Posterior vena cava (tissue), 2 donors: ENCODE measurements at regions of chr18 and their contacts with region 1.

Region 1: DNA sequence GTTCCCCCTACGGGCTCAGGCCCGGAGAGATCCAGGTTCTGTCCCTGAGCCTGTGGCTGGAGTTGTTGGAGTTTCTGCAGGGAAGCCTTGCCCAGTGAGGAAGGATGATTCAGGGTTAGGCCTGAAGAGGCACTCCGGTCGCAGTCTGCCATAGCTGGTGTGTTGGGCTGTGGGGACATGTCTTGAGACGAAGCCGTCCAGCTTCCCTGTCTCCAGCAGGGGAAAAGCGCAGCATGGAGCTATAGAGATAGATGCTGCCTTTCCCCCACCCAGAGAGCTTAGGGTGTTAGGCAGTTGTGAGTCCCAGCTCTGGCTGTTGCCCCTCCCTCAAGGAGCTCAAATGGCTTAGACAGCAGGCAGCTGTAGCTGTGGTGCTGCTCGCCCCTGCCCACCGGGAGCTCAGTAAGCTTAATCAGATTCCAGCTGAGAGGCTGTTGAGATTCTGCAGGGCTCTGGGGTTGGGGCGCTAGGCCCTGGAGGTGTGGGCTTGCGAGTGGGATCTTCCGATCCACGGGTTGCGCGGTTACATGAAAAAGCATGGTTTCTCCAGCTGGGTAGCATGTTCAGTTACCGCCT is 103.9 kb downstream of the PMAIP1 start:
- DNase-seq: no peak

Region 2: GRCh38 chr18:59498506-59499086 is 505.1 kb before region 1 on chr18:
- intact Hi-C with region 1: loop called in 1 of 2 experiments (anchors 5 kb)
- DNase-seq: no peak